HEK293T (cell line): ENCODE measurements at regions of chr19 and their contacts with region 1.

Region 1: DNA sequence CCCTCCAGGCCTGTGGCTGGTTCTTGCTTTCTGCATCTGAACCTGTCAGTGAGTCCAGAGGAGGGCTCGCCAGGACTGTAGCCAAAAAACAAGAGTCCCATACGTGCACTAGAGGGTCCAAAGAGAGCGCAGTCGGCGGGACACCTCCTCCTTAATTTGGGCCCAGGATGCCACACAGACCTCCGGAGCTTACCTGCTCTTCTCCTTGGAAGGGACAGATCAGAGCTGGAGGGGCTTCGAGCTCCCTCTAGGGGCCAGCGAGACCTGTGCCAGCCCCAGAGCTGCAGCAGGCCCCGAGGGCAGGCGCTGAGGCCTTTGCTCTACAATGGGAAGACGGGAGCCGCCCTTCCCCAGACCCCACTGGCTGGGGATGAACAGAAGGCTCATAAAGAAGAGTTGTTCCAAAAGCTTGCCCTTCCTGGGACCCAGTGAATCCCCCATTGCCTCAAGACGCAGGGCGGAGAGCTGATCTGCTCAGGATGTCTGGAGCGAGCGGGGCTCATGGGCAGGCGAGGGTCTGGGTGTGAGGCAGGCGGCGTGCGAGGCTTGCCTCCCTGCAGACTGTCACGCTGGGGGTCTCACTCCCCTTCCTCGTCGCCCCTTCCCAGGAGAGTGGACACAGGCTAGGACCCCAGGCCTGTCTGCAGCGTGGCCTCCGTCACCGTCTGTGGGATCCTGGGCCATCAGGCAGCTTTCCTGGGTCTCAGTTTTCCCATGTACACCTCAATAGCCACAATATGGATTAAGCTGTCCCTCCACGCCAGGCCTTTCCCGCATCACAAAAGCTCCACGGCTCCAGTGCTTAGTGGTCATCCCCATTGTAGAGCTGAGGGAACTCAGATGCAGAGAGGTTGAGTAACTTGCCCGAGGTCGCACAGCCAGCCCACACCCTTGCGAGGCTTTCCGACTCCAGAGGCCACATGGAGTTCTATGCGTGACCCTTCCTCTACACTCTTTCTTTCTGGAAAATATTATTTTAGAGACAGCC is 46.9 kb upstream of the VSTM2B start:
- DNase-seq: peak; percentile 35

Region 2: GRCh38 chr19:29446361-29446760 is 32.5 kb before region 1 on chr19:
- CTCF ChIA-PET with region 1: no interaction called
- POLR2A ChIA-PET with region 1: no interaction called
- DNase-seq: no peak

Region 3: DNA sequence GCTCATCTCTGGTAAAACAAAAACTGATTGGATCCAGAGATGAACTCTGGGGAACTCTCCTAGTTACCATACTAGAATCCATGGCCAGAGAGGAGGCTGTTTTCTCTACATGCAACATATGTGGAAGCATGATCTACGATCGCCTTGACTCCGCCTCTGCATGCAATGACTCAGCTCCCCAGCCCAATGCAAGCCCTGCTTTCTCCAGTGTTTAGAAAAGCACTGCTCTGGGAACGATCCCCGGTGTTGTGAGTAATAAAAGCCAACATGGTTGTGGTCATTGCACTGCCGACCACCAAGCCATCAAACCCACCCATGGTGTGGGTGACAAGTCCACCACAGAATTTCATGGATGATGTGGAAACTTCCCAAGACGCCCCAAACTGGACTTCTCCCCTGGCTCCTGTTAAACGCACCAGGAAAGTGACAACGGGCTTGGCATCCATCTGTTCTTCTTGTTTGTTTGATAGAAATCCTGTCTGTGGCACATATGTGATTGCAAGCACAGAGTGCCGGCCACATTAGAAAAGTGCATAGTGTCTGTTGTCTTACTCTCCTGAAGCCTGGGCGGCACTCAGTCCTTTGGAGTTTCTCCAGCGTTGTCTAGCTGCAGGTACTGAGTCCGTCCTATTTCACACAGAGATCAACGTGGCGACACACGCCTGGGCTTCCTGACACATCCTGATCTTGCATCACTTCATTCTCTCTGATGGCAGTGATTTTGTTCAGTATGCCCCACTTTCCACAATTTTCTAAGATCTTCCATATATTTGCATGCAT is 10.5 kb after region 1 on chr19:
- CTCF ChIA-PET with region 1: interaction called, 10 read pairs
- POLR2A ChIA-PET with region 1: no interaction called
- DNase-seq: no peak

Region 4: DNA sequence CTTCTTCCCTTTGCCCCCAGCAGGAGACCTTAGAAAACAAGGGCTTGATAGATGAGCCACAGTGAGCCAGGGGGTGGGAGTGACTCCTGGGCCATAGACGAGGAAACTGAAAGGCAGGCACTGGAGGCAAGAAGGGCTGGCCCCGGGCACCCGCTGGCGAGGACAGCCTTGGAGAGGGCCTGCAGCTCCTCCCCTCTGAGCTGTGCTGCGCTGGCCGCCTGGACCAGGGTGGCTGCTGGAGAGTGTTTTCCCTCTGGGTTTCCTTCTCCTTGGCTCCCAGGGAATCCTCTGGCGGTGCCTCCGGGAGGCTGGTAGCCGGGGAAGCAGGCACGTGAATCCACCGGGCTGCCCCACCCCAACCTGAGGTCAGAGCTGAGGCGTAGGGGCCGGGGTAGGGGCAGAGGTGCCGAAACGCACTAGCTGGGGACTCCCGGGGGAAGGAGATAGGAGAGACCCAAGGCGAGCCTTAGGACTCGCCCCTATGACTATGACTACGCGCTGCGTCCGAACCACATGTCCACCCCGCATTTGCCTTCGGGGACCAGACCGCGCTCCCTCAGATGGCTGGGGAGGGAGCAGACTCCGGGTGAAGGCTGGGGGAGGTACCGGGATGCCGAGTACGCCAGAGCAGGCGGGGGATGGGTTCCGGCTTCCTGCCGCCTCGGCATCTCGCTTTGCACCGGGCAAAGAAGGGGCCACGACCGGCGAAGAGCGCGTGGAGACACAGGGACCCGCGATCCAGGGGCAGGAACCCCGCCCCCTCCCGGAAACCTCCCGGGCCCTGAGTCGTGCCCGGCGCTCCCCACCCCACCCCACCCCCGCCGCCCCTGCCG is 45.9 kb after region 1 on chr19:
- CTCF ChIA-PET with region 1: no interaction called
- POLR2A ChIA-PET with region 1: no interaction called
- DNase-seq: no peak